ENCODE measurements at regions of chr3 and their contacts with region 1.

Region 1: DNA sequence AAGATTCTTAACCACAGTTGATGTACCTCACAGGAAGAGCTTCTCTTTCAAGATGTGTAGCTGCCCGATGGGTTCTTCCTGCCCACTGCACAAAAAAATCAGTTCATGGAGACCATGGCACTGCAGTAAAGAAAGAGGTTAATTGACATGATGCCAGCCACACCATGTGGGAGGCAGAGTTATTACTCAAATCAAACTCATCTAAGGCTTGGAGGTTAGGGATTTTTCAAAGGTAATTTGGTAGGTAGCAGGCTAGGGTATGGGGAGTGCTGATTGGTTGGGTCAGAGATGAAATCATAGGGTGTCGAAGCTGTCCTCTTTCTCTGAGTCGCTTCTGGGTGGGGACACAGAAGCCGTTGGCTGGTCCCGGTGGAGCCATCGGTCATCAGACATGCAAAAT is 57.4 kb upstream of the BDH1 start:
- DNase-seq: peak in 8 of 10 donors; percentile 47 to 87 (median 76)
- ATAC-seq: peak; percentile 94 to 97
- H3K4me3 Mint-ChIP-seq: peak overlapping the region; percentile 1 to 79 (median 62)
- H3K27ac Mint-ChIP-seq: peak overlapping the region; percentile 78 to 95 (median 94)
- H3K4me1 Mint-ChIP-seq: peaks cover 12 to 35% (median 18%) of the 10 kb centered on the region in 4 donors
- H3K27me3 Mint-ChIP-seq: no peaks in the 10 kb centered on the region

Region 2: GRCh38 chr3:197298341-197298857 is 314.8 kb before region 1 on chr3 and contains the start of gene DLG1:
- POLR2A ChIA-PET with region 1: interaction called, 10 read pairs
- DNase-seq: peak; percentile 39 to 87 (median 70)
- ATAC-seq: peak; percentile 57 to 58
- H3K4me3 Mint-ChIP-seq: peak within 1 kb of the TSS; percentile 84 to 97 (median 94)
- H3K27ac Mint-ChIP-seq: peak within 1 kb of the TSS; percentile 85 to 97 (median 94)
- H3K4me1 Mint-ChIP-seq: peaks cover 8 to 40% (median 26%) of the 10 kb centered on the region in 4 donors
- H3K27me3 Mint-ChIP-seq: peaks cover 0 to 7% (median 0%) of the 10 kb centered on the region in 5 donors
- polyA plus RNA-seq, gene DLG1: 23.5 to 28.5 (median 25.8) TPM

Measured in naive thymus-derived CD8-positive, alpha-beta T cell (primary cell).